ENCODE measurements at regions of chrX and their contacts with region 1.

Region 1: GRCh38 chrX:101415180-101416145 is 7.4 kb downstream of the HNRNPH2 start:
- DNase-seq: peak in 5 of 7 donors; percentile 15 to 55 (median 39)
- H3K4me3 ChIP-seq: no peak overlapping the region
- H3K27ac ChIP-seq: peak overlapping the region in 2 of 5 donors; percentile 55 to 57
- H3K4me1 ChIP-seq: peaks cover 0 to 19% of the 10 kb centered on the region in 2 donors
- H3K27me3 ChIP-seq: no peaks in the 10 kb centered on the region
- CTCF ChIP-seq: peak; percentile 44 to 86 (median 69)
- POLR2A ChIP-seq: no peak

Region 2: GRCh38 chrX:101595739-101596419 is 180.4 kb after region 1 on chrX:
- intact Hi-C with region 1: loop called in 1 of 2 experiments (anchors 10 kb)
- DNase-seq: peak in 5 of 7 donors; percentile 25 to 47 (median 45)
- H3K4me3 ChIP-seq: no peak overlapping the region
- H3K27ac ChIP-seq: no peak overlapping the region
- H3K4me1 ChIP-seq: no peaks in the 10 kb centered on the region
- H3K27me3 ChIP-seq: peaks cover 20% of the 10 kb centered on the region
- CTCF ChIP-seq: peak in 5 of 6 experiments; percentile 65 to 83 (median 77)
- POLR2A ChIP-seq: no peak

Region 3: DNA sequence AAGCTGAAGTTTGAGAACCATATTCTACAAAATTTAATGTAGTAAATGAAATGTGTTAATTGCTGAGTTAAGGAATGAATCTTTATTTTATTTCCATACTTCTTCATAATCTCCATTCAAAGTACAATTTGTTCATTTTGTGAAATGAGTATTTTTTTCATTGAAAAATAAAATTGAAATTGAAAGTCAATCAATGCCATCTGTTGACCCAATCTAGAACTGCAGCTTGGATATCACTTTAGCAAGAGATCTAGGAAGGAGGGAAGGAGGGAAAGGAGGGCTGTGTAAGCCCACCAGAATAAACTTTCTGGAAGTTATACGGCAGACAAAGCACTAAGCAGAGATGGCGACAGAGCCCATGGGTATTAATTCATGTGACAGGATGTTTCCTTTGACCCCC is 388.0 kb after region 1 on chrX:
- intact Hi-C with region 1: loop called in 1 of 2 experiments (anchors 10 kb)
- DNase-seq: no peak
- H3K4me3 ChIP-seq: no peak overlapping the region
- H3K27ac ChIP-seq: no peak overlapping the region
- H3K4me1 ChIP-seq: no peaks in the 10 kb centered on the region
- H3K27me3 ChIP-seq: peaks cover 6% of the 10 kb centered on the region
- CTCF ChIP-seq: peak; percentile 18 to 53 (median 38)
- POLR2A ChIP-seq: no peak